ENCODE measurements at regions of chr15 and their contacts with region 1.

Region 1: GRCh38 chr15:45714590-45715488 is 80.0 kb downstream of the SQOR start:
- DNase-seq: no peak

Region 2: DNA sequence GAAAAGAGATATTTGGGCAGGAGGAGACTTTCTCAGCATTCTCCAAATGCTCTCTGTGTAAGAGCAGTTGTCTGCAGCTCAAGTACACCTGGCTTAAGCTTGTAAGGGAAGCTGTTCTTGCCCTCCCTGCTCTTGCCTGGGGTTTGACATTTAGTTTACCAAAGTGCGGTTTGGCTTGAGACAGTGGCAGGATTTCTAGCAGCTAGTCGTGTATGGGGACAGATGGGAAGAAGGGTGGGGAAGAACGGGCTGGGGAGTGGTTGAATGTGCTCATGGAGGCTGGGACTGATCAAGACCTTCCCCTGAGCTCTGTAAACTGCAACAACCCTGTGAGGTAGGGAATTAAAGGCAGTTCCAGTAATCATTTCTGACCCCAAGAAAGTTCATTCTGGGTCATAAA is 40.2 kb before region 1 on chr15:
- intact Hi-C with region 1: no loop called
- DNase-seq: no peak

Region 3: DNA sequence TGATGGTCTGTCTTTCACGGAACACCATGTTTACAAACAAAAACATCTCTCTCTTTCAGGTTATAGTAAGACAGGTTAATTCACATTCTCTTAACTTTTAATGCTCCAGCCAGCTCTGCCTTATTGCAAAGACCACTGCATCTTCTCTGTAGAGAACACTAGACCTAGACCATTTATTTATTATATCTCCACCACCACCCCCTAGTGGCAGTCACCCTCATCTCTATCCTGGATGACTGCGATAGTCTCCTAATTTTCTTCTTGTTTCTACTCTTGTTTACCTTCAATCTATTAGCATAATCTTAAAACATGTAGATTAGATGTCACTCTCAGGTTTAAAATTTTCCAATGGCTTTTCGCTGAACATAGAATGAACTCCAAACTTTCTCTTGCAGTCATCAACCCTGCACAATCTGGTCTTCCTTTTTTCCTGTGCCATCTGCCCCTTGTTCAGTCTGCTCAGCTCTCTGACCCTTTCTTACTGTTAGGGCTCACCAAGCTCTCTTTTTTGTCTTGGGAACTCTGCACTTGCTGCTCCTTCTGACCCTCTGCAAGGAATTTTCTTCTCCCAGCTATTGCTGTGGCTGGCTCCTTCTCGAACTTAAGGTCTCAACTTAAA is 75.6 kb after region 1 on chr15:
- intact Hi-C with region 1: loop called (anchors 2 kb)
- DNase-seq: no peak

Region 4: DNA sequence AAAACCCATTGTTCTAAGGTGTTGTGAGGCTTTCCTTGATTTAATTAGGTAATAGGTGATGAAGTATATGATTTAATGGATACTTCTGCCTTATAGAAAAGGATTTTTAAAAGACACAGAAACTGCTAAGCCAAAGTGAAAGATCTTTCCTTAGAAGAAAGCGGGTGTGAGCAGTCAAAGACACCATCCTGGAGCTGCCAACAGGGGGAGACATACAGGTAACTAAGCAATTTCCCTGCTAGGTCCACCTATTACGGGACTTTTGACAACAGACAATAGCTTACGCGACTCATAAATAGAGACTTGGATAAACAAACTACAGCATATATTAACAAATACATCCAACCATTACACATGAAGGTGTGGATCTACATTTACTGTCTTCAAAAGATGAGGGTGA is 589.5 kb after region 1 on chr15:
- intact Hi-C with region 1: loop called (anchors 10 kb)
- DNase-seq: no peak

Measured in cardiac septum (tissue), 1 donor.